OCI-LY7 (cell line): ENCODE measurements at regions of chr11 and their contacts with region 1.

Region 1: DNA sequence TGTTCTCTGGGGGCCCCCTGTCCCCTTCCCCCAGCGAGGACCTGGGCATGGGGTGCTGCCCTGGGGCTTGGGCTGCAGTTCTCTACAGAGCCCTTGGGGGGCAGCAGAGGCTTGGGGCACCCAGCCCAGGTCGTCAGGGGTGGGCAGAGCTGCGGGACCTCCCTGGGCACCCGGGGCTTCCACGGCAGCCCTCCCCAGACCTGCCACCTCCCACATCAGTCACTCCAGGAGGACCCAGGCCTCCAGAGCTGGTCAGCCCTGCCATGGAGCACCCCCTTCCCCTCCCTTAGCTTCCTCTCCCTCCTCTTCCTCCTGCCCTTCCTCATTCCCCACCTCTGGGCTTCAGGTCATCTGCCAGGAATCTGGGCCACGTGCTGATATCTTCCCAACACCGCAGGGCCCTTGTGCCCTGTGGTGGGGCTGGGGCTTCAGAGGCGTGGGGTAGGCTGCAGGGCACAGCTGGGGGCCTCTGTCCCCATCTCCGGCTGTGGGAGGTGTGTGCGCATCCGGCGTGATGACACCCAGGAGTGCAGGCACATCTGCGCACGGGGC is 5.8 kb downstream of the TSPAN4 start:
- DNase-seq: peak; percentile 71
- H3K4me3 ChIP-seq: peak overlapping the region; percentile 66
- H3K27ac ChIP-seq: no peak overlapping the region
- H3K4me1 ChIP-seq: peaks cover 29% of the 10 kb centered on the region
- CTCF ChIP-seq: peak; percentile 87

Region 2: GRCh38 chr11:910589-911195 is 62.2 kb after region 1 on chr11 and contains the start of gene CHID1:
- CTCF ChIA-PET with region 1: no interaction called
- POLR2A ChIA-PET with region 1: no interaction called
- intact Hi-C with region 1: loop called (anchors 5 kb)
- DNase-seq: peak; percentile 89
- H3K4me3 ChIP-seq: peak within 1 kb of the TSS; percentile 88
- H3K27ac ChIP-seq: peak within 1 kb of the TSS; percentile 44
- H3K4me1 ChIP-seq: peaks cover 35% of the 10 kb centered on the region
- CTCF ChIP-seq: no peak
- total RNA-seq, gene CHID1: 30.6 and 39.4 TPM in 2 replicates

Region 3: GRCh38 chr11:975827-976226 is 127.4 kb after region 1 on chr11:
- CTCF ChIA-PET with region 1: no interaction called
- POLR2A ChIA-PET with region 1: interaction called, 3 read pairs
- intact Hi-C with region 1: loop called (anchors 5 kb)
- DNase-seq: peak; percentile 38
- H3K4me3 ChIP-seq: no peak overlapping the region
- H3K27ac ChIP-seq: no peak overlapping the region
- H3K4me1 ChIP-seq: no peaks in the 10 kb centered on the region
- CTCF ChIP-seq: peak; percentile 55

Region 4: DNA sequence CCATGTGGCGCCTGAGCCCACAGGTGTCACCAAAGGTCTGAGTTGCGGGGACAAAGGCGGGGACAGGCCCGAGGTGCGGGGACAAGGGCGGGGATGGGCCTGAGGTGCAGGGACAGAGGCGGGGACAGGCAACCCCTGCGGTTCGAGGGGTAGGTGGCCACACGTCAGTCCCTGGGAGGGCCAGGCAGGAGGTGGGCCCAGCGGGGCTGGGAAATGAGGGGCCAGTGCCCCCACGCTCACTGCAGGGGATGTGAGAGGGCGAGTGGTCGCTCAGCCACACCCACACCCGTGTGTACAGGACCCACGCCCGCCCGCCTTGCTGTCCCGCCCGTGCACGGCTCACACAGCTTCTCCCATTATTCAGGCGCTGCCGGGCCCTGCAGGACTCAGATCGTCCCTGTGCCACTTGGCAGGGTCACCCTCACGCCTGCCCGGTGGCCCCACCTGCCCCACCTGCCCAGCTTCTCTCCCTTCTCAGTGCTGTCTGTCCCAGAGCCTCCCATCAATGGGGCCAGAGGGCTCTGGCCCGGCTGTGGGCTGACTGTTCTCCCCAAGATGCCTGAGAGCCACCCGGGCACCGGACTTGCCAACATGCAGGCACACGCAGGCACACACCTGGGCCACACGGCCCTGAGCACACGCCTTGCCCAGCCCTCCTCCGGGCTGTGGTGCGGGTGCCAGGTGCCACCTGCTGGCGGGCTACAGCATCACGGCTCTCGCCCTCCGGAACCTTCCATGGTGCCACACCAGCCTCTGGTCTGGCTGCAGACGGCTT is 202.3 kb after region 1 on chr11:
- CTCF ChIA-PET with region 1: interaction called, 3 read pairs
- POLR2A ChIA-PET with region 1: no interaction called
- intact Hi-C with region 1: loop called (anchors 1 kb)
- DNase-seq: peak; percentile 79
- H3K4me3 ChIP-seq: no peak overlapping the region
- H3K27ac ChIP-seq: no peak overlapping the region
- H3K4me1 ChIP-seq: no peaks in the 10 kb centered on the region
- CTCF ChIP-seq: peak; percentile 87